Naive thymus-derived CD4-positive, alpha-beta T cell (primary cell): ENCODE measurements at regions of chr19 and their contacts with region 1.

Region 1: DNA sequence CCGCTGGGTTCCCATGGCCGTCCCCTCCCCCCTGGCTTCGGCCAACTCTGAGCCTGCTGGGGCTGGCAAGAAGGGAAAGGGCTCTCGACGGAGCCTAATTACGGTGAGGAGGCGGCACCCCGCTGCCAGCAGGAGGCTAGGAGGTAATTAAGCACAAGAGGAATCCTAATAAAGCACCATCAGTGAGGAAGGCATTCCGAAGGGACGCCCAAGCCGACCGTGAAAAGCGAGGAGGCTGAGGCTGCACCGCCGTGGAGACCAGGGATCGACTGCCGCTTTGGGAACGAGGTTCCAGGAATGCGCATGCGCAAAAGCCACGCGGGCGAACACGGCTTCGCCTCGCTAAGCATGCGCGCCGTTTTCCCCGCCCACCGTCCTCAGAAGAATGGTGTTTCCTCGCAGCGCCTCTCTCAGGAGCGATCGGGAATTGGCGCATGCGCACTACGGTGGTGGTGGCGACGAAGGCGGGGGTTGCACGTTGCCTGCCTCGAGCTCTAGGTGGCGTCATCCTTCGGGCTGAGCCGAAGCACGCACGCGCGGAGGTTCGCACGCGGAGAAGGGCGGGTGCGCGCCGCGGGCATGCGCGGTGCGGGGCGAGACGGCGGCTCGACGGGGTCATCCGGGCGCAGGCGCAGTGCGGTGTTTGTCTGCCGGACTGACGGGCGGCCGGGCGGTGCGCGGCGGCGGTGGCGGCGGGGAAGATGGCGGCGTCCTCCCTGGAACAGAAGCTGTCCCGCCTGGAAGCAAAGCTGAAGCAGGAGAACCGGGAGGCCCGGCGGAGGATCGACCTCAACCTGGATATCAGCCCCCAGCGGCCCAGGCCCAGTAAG is at the start of gene MAP2K7:
- DNase-seq: peak; percentile 99 to 100 (median 100)
- ATAC-seq: peak; percentile 91
- H3K4me3 ChIP-seq: peak within 1 kb of the TSS; percentile 91
- H3K4me3 Mint-ChIP-seq: peak within 1 kb of the TSS; percentile 87 to 95 (median 92)
- H3K27ac ChIP-seq: peak within 1 kb of the TSS; percentile 77
- H3K27ac Mint-ChIP-seq: peak within 1 kb of the TSS; percentile 91 to 98 (median 96)
- H3K4me1 ChIP-seq: peaks cover 20 to 24% of the 10 kb centered on the region in 2 donors
- H3K4me1 Mint-ChIP-seq: peaks cover 12 to 37% (median 30%) of the 10 kb centered on the region in 7 donors
- H3K27me3 ChIP-seq: no peaks in the 10 kb centered on the region
- H3K27me3 Mint-ChIP-seq: peaks cover 0 to 3% (median 0%) of the 10 kb centered on the region in 5 donors
- total RNA-seq, gene MAP2K7: 48.7 to 109 (median 66.5) TPM

Region 2: DNA sequence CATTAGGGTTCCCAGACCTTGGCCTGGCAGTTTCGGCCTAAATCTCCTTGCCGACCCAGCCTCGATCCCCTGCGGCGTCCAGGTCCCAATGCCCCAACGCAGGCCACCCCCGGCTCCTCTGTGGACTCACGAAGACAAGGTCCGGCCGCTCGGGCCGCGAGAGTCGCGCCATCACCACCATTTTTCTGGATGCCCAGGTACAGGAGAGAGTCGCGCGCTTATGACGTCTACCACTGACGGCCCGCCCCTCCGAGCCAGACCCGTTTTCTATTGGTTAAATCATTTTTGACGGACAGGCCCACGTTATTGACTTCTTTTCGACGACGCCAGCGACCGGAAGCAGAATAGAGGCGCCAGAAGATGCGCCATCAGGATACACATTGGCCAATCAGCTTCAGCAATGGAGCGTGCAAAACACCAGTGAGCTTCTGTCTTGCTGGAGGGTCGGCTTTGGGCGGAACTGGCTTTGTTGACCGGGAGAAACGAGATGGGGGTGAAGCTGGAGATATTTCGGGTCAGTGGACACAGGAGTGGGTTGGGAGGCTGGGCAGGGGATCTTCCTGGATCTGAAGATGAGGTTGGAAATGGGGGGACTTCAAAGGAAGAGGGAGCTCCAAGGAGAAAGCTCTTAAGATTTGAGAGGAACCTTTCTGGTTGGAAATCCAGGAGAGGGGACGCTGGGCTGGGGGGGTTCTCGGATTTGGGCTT is 274.0 kb before region 1 on chr19 and contains the starts of genes PET100 and XAB2:
- CTCF ChIA-PET with region 1: no interaction called
- POLR2A ChIA-PET with region 1: no interaction called
- intact Hi-C with region 1: loop called (anchors 1 kb)
- DNase-seq: peak; percentile 81 to 97 (median 95)
- ATAC-seq: peak; percentile 97
- H3K4me3 ChIP-seq: peak within 1 kb of the TSS; percentile 89
- H3K4me3 Mint-ChIP-seq: peak within 1 kb of the TSS; percentile 87 to 100 (median 98)
- H3K27ac ChIP-seq: peak within 1 kb of the TSS; percentile 92
- H3K27ac Mint-ChIP-seq: peak within 1 kb of the TSS; percentile 96 to 100 (median 99)
- H3K4me1 ChIP-seq: peaks cover 19 to 21% of the 10 kb centered on the region in 2 donors
- H3K4me1 Mint-ChIP-seq: peaks cover 25 to 57% (median 38%) of the 10 kb centered on the region in 7 donors
- H3K27me3 ChIP-seq: no peaks in the 10 kb centered on the region
- H3K27me3 Mint-ChIP-seq: no peaks in the 10 kb centered on the region
- total RNA-seq, gene PET100: 112 to 134 (median 117) TPM
- total RNA-seq, gene XAB2: 49.3 to 79.8 (median 76.4) TPM

Region 3: DNA sequence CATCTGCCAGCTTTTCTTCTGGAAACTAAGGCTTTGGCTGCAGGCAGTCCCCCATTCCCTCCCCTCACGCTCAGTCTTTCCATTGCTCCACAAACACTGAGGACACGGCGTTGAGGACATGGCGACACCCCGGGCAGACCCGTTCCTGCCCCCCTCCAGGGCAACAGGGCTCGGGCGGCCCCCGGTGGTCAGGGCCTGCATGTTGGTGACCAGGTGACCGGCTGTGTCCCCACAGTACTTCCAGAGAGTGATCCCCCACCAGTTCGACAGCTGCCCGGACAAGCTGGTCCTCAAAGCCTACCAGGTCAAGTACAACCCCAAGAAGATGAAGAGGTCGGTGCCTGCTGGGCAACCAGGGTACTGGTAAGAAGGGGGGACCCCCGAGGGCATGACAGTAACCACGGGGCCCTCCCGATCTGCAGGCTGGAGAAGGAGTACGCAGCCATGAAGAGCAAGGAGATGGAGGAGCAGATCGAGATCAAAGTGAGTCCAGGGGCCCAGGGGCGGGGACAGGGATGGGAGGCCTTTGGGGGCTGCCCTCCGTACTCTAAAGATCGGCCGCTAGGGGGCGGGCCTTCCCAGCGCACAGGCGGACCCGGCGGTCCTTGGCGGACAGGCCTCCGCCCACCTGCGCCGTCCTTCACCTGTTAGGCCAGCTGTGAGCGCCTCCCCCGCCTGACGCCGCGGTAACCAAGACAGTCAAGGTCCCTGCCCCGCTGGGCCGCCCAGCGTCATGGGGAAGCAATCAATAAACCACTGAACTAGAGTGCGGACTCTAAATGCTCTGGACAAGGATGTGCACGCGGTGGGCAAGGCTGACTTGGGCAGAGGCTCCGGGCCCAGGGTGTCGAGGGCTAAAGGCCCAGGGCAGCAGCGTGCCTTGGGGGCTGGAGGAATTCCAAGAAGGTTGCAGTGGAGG is 50.3 kb before region 1 on chr19:
- CTCF ChIA-PET with region 1: interaction called, 3 read pairs
- POLR2A ChIA-PET with region 1: no interaction called
- intact Hi-C with region 1: loop called in 1 of 2 experiments (anchors 1 kb)
- DNase-seq: peak; percentile 38 to 76 (median 51)
- ATAC-seq: peak; percentile 87
- H3K4me3 ChIP-seq: no peak overlapping the region
- H3K4me3 Mint-ChIP-seq: peak overlapping the region in 1 of 10 donors; percentile 33
- H3K27ac ChIP-seq: no peak overlapping the region
- H3K27ac Mint-ChIP-seq: peak overlapping the region in 1 of 9 donors; percentile 52
- H3K4me1 ChIP-seq: peaks cover 3 to 7% of the 10 kb centered on the region in 2 donors
- H3K4me1 Mint-ChIP-seq: peaks cover 0 to 8% (median 5%) of the 10 kb centered on the region in 7 donors
- H3K27me3 ChIP-seq: no peaks in the 10 kb centered on the region
- H3K27me3 Mint-ChIP-seq: no peaks in the 10 kb centered on the region

Region 4: DNA sequence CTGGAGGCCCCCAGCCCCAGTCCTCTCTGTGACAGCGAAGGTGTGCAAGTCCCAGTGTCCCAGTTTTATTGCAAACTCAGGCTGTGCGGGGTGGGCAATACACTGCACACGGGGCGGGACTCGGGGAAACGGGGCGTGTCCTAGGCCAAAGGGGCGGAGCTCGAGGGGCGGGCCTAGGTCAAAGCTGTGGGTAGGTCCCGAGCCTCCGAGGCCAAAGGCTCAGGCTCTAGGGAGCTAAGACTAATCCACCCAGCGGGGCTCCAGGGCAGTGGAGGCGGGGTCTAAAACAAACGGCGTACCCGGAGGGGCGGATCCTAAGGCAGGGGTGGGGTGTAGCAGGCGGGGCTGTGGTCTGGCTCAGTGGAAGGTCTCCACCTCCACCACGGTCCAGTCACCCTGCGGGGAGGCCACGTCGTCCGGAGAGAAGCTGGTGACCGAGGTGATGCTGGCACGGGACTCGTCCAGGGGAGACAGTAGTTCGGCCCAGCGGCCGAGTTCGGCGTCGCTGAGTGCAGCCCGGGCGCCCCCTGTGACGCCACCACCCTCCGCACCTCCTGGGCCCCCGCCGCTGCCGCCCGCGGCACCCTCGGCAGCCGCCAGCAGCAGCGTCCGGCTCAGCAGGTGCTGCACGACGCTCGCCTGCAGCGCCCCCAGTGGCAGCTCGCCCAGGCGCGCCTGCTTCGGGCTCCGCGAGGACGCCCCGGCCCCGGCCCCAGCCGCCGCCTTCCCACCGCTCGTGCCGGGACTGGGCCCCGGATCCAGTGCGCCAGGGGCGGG is 34.6 kb before region 1 on chr19:
- CTCF ChIA-PET with region 1: interaction called, 9 read pairs
- POLR2A ChIA-PET with region 1: interaction called, 16 read pairs
- intact Hi-C with region 1: loop called (anchors 1 kb)
- DNase-seq: peak in 8 of 9 donors; percentile 51 to 95 (median 89)
- ATAC-seq: peak; percentile 83
- H3K4me3 ChIP-seq: peak overlapping the region; percentile 74
- H3K4me3 Mint-ChIP-seq: peak overlapping the region; percentile 69 to 87 (median 81)
- H3K27ac ChIP-seq: peak overlapping the region; percentile 69
- H3K27ac Mint-ChIP-seq: peak overlapping the region; percentile 34 to 90 (median 58)
- H3K4me1 ChIP-seq: peaks cover 12 to 19% of the 10 kb centered on the region in 2 donors
- H3K4me1 Mint-ChIP-seq: peaks cover 24 to 39% (median 36%) of the 10 kb centered on the region in 7 donors
- H3K27me3 ChIP-seq: peaks cover 0 to 2% of the 10 kb centered on the region in 2 donors
- H3K27me3 Mint-ChIP-seq: peaks cover 0 to 62% (median 8%) of the 10 kb centered on the region in 5 donors

Region 5: GRCh38 chr19:7925171-7925851 is 21.9 kb after region 1 on chr19:
- CTCF ChIA-PET with region 1: interaction called, 10 read pairs
- POLR2A ChIA-PET with region 1: interaction called, 35 read pairs
- intact Hi-C with region 1: loop called (anchors 1 kb)
- DNase-seq: peak; percentile 58 to 83 (median 72)
- ATAC-seq: no peak
- H3K4me3 ChIP-seq: no peak overlapping the region
- H3K4me3 Mint-ChIP-seq: peak overlapping the region; percentile 74 to 88 (median 84)
- H3K27ac ChIP-seq: no peak overlapping the region
- H3K27ac Mint-ChIP-seq: peak overlapping the region in 6 of 9 donors; percentile 52 to 86 (median 76)
- H3K4me1 ChIP-seq: peaks cover 13 to 14% of the 10 kb centered on the region in 2 donors
- H3K4me1 Mint-ChIP-seq: peaks cover 5 to 38% (median 22%) of the 10 kb centered on the region in 7 donors
- H3K27me3 ChIP-seq: no peaks in the 10 kb centered on the region
- H3K27me3 Mint-ChIP-seq: no peaks in the 10 kb centered on the region